GM10248 (cell line): ENCODE measurements at regions of chr1 and their contacts with region 1.

Region 1: DNA sequence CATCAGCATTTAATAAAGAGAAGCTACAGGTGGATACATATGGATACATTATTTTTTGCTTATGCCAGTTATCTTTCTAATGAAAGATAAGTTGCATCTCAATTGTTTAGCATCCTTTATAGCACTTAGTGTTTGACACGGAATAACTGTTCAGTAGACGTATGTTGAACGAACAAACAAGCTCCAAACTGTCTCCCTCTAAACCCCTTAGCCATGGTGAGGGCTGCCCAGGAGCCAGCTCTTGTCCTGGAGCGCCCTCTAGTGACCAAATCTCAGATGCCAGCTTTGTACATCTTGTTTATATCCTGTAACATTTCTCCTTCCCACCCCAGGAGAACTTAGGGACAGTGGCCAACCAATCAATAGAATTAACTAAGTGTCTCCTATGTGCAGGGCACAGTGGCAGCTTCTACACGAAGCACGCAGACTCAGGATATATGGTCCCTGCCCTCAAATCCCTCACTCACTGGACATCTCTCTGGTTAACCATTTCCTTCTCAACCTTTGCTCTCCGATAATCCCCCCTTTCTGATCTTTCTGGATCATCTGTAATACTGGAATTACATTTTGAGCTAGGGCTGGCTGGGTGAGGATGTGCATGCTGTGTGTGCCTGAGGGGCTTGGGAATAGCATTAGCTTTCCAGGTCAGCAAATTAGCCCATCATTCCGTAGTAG is 22.9 kb downstream of the KCNA10 start:
- DNase-seq: peak; percentile 83
- CTCF ChIP-seq: peak; percentile 94

Region 2: DNA sequence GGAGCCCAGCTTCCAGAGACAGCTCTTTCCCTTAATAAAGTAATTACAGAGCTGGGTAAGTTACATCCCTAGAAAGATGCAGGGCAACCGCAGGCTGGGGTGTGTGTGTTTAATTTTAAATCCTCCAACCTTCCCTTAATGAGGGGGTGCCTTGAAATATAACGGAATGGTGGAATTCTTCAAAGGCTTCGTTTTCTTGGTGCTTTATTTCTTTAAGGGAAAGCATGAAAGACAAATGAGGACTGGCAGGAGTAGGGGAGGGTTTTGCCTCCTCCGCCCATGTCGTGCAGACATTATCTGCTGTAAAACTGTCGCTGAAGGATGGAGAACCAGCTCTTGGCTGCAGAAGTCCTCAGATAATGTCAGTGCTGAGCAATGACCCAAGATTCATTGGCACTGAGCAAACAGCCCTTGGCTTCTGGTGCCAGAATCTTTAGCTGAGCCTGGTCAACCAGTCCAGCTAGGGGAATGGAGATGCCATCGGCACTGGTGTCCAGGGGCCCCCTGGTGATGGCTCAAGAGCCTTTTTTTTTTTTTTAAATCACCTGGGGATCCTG is 330.2 kb before region 1 on chr1:
- CTCF ChIA-PET with region 1: interaction called, 14 read pairs
- POLR2A ChIA-PET with region 1: no interaction called
- DNase-seq: no peak
- CTCF ChIP-seq: no peak

Region 3: GRCh38 chr1:110203021-110203661 is 292.9 kb before region 1 on chr1:
- CTCF ChIA-PET with region 1: interaction called, 114 read pairs
- POLR2A ChIA-PET with region 1: no interaction called
- DNase-seq: peak; percentile 78
- CTCF ChIP-seq: peak; percentile 81

Region 4: GRCh38 chr1:110326826-110327225 is 169.2 kb before region 1 on chr1:
- CTCF ChIA-PET with region 1: no interaction called
- POLR2A ChIA-PET with region 1: no interaction called
- DNase-seq: no peak
- CTCF ChIP-seq: no peak

Region 5: DNA sequence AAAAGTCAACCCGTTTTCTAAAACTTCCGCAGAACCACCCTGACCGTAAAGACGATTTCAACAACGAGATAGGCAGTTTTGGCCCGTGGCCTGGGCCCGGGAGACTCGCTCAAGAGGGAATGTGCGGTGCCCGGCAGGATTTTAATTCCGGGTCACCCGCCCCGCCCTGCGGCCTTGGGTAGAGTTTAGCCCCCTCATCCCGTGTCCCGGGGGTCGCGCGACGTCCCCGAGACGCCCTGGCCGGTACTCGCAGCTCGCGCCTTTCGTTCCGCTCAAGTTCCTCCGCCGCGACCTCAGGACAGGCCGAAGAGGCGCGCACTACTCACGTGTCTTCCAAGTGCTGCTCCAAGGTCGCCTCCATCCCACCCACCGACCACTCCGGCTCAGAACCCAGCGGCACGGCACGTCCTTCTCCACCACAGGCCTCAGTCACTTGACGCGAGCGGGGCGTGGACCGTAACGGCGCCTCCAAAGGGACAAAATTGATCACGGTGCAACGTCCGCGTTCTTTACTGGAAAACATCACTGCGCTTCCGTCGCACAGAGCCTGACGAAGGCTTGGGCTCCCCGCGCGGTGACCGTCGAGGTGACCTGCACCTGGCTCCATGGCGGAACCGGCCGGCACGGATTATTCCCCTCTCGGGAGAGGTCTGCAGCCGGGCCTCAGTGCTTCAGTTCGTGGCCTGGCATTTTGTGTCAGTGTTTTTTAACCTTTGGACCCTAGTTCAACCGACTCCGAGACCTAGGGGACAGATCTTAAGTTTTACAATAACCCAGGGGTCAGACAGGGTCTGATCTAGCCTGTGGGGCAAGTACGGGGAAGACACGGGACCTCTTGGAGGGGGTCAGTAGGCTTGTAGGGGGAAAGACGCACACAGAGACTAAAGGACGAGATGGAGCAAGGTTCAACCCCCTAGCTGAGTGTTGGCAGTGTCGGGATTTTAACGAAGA is 88.5 kb before region 1 on chr1 and contains the start of gene LAMTOR5:
- CTCF ChIA-PET with region 1: interaction called, 117 read pairs
- POLR2A ChIA-PET with region 1: no interaction called
- DNase-seq: peak; percentile 91
- CTCF ChIP-seq: no peak

Region 6: DNA sequence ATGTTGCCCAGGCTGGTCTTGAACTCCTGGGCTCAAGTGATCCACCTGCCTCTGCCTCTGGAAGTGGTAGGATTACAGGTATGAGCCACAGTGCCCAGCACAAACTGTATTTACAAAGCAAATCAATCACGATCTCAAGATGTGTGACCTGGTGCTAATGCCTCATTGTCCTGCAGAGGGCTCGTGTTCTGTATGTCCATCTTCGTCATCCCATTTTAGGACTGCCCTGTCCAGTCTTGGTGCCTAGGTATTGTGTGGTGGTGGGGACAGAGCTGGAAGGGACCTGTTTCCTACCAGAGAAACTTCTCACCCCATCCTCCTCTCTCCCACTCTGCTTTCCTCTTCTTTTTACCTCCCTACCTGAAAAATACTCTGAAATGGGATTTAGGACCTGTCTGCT is 24.9 kb before region 1 on chr1:
- CTCF ChIA-PET with region 1: interaction called, 27 read pairs
- POLR2A ChIA-PET with region 1: no interaction called
- DNase-seq: no peak
- CTCF ChIP-seq: no peak

Region 7: GRCh38 chr1:110508038-110508940 is 12.2 kb after region 1 on chr1:
- CTCF ChIA-PET with region 1: interaction called, 35 read pairs
- POLR2A ChIA-PET with region 1: no interaction called
- DNase-seq: peak; percentile 59
- CTCF ChIP-seq: no peak

Region 8: GRCh38 chr1:110573314-110573713 is 77.3 kb after region 1 on chr1:
- CTCF ChIA-PET with region 1: interaction called, 11 read pairs
- POLR2A ChIA-PET with region 1: no interaction called
- DNase-seq: no peak
- CTCF ChIP-seq: no peak